ENCODE measurements at regions of chr6 and their contacts with region 1.

Region 1: DNA sequence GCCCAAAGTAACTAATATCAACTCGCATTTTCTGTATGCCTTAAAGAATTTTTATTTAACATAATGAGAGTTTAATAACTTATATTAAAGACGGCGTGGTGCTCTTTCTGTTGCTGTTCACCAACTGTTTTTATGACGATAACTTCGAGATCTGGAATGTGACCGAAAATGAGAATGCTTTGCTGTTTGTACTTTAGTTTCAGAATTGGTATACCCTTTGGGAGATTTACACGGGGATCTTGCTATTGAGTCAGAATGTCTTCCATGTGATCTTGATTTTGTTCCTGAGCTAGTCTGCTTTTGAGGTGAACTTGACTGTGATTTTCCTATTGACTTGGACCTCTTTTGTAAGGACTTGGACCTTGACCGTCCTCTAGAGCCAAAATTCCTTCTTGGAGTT is 17.9 kb downstream of the PNRC1 start:
- DNase-seq: no peak
- H3K4me3 ChIP-seq: no peak overlapping the region
- H3K27ac ChIP-seq: no peak overlapping the region
- H3K4me1 ChIP-seq: no peaks in the 10 kb centered on the region
- H3K27me3 ChIP-seq: no peaks in the 10 kb centered on the region
- CTCF ChIP-seq: no peak
- POLR2A ChIP-seq: no peak

Region 2: GRCh38 chr6:89048985-89049384 is 49.5 kb before region 1 on chr6:
- intact Hi-C with region 1: no loop called
- DNase-seq: no peak
- H3K4me3 ChIP-seq: no peak overlapping the region
- H3K27ac ChIP-seq: peak overlapping the region in 1 of 2 donors; percentile 5
- H3K4me1 ChIP-seq: peaks cover 0 to 10% of the 10 kb centered on the region in 2 donors
- H3K27me3 ChIP-seq: no peaks in the 10 kb centered on the region
- CTCF ChIP-seq: no peak
- POLR2A ChIP-seq: no peak

Region 3: DNA sequence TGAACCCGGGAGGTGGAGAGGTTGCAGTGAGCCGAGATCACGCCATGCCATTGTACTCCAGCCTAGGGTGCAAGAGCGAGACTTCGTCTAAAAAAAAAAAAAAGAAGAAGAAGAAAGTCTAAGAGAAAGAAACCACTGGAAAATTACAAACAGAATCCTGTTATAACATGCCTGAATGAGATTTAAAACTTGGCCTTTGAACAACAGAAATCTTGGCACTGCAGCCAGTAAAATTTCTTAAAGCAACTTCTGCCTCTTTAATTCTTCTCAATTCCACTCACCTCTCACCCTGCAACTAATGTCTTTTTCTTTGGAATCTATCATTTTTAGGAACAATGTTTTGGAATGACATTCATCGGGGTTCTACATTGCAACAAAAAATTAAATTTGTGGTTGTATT is 73.7 kb after region 1 on chr6:
- intact Hi-C with region 1: loop called (anchors 2 kb)
- DNase-seq: no peak
- H3K4me3 ChIP-seq: no peak overlapping the region
- H3K27ac ChIP-seq: no peak overlapping the region
- H3K4me1 ChIP-seq: no peaks in the 10 kb centered on the region
- H3K27me3 ChIP-seq: no peaks in the 10 kb centered on the region
- CTCF ChIP-seq: no peak
- POLR2A ChIP-seq: no peak